ENCODE measurements at regions of chr11 and their contacts with region 1.

Region 1: DNA sequence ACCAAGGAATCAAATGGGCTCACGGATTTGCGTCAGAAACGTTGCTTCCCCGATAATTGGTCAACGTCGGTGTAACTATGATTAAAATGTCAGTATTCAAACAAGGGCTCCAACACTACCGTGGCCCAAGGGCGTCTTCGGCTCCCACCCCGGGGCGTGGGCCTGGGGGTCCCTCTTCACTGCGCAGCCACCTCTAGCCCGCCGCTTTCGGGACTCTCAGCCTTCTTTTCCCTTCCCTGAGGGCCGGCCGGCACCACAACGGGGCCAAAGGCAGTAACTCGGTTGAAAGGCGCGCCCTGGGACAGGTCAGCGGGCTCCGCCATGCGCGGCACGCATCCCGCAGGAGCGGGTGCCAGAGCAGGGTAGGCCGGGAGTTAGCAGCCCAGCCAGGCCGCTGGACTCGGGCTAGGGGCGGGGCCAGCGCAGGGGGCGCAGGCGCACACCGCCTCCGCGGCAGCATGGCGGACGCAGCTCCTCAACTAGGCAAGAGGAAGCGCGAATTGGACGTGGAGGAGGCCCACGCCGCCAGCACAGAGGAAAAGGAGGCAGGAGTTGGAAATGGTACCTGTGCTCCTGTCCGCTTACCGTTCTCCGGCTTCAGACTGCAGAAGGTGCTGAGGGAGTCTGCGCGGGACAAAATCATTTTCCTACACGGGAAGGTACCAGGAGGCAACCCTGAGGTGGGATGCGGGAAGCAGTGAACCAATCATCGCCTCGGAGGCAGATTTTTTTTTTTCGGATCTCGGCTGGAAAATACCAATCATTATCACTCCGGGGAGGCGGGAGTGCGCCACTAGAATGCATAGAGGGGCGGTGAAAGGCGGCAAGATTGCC is at the start of gene DCPS:
- DNase-seq: peak; percentile 92
- H3K4me3 ChIP-seq: peak within 1 kb of the TSS; percentile 72 to 88 (median 88)
- H3K27ac ChIP-seq: peak within 1 kb of the TSS; percentile 90
- H3K4me1 ChIP-seq: peaks cover 26% of the 10 kb centered on the region
- H3K27me3 ChIP-seq: no peaks in the 10 kb centered on the region
- CTCF ChIP-seq: no peak
- total RNA-seq, gene DCPS: 16.5 to 29.0 TPM

Region 2: GRCh38 chr11:126282736-126283591 is 20.9 kb before region 1 on chr11 and contains the start of gene TIRAP:
- CTCF ChIA-PET with region 1: no interaction called
- dilution Hi-C with region 1: no loop called
- in situ Hi-C with region 1: no loop called
- intact Hi-C with region 1: loop called (anchors 2 kb)
- DNase-seq: peak; percentile 53
- H3K4me3 ChIP-seq: peak within 1 kb of the TSS; percentile 60 to 81 (median 69)
- H3K27ac ChIP-seq: peak within 1 kb of the TSS; percentile 18
- H3K4me1 ChIP-seq: peaks cover 23% of the 10 kb centered on the region
- H3K27me3 ChIP-seq: no peaks in the 10 kb centered on the region
- CTCF ChIP-seq: no peak
- total RNA-seq, gene TIRAP: 6.3 to 8.8 TPM

Region 3: GRCh38 chr11:126416542-126417090 is 112.8 kb after region 1 on chr11:
- CTCF ChIA-PET with region 1: no interaction called
- dilution Hi-C with region 1: no loop called
- in situ Hi-C with region 1: loop called in 1 of 2 experiments (anchors 25 kb)
- intact Hi-C with region 1: no loop called
- DNase-seq: no peak
- H3K4me3 ChIP-seq: peak overlapping the region in 1 of 3 experiments; percentile 12
- H3K27ac ChIP-seq: peak overlapping the region; percentile 7
- H3K4me1 ChIP-seq: peaks cover 11% of the 10 kb centered on the region
- H3K27me3 ChIP-seq: no peaks in the 10 kb centered on the region
- CTCF ChIP-seq: no peak

Region 4: DNA sequence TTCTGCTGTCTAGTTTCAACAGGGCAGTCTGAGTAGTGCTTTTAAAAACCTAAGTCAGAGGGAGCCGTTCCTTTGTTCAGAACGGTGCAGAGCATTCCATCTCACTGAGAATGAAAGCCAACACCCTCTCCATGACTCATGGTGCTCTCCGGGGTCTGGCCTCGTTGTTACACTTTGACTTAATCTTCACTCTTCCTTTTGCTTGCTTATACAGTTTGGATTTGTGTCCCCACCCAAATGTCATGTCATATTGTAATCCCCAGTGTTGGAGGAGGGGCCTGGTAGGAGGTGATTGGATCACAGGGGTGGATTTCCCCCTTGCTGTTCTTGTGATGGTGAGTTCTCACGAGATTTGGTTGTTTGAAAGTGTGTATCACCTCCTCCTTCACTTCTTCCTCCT is 343.9 kb after region 1 on chr11:
- CTCF ChIA-PET with region 1: no interaction called
- dilution Hi-C with region 1: no loop called
- in situ Hi-C with region 1: no loop called
- intact Hi-C with region 1: loop called (anchors 10 kb)
- DNase-seq: peak; percentile 92
- H3K4me3 ChIP-seq: no peak overlapping the region
- H3K27ac ChIP-seq: peak overlapping the region; percentile 96
- H3K4me1 ChIP-seq: peaks cover 20% of the 10 kb centered on the region
- H3K27me3 ChIP-seq: no peaks in the 10 kb centered on the region
- CTCF ChIP-seq: no peak